ENCODE measurements at regions of chr20 and their contacts with region 1.

Region 1: DNA sequence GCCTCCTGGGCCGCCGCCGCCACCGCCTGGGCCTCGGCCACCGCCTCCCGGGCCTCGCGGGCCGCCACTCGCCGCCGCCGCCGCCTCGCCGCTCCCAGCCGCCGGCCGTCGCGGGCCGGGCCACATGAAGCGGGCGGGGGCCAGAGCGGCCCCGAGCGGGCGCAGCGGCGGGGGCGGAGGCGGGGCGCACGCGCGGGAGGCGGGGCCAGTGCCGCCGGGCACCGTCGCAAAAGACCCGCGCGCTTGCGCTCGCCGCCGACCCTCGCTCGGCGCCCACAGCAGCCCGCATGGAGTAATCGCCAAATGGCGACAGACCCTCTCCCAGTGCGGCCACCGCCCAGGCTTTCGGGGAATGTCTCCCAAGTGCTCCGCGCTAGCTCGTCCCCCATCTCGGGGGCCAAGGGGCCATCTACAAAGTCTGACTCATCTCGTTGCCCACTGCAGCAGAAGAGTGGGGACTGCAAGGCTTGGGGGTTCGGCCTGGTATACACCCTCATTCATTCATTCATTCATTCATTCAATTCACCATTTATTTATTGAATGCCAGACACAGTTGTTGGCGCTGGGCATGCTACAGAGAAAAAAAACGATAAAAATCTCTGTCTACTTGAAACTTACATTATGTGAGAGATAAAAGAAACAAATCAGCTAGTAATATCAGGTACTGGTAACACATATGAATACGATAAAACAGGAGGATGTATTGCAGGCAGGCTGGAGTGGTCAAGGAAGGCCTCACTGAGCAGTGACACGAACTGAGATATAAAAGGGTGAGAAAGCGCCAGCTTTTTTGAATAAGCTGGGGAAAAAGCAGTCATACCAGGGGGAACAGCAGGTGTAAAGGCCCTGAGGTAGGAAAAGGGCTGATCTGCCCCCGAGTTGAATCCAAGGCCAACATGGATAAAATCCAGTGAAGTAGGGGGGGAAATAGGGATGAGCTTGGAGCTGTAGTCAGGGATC is at the start of gene B4GALT5:
- DNase-seq: peak; percentile 79 to 92 (median 88)
- ATAC-seq: peak; percentile 89 to 90
- H3K4me3 ChIP-seq: peak within 1 kb of the TSS; percentile 94
- H3K27ac ChIP-seq: peak within 1 kb of the TSS; percentile 89
- H3K4me1 ChIP-seq: peaks cover 4% of the 10 kb centered on the region
- H3K27me3 ChIP-seq: no peaks in the 10 kb centered on the region
- total RNA-seq, gene B4GALT5: 22.6 to 33.6 (median 23.7) TPM

Region 2: GRCh38 chr20:49620364-49621240 is 93.4 kb before region 1 on chr20:
- intact Hi-C with region 1: no loop called
- DNase-seq: no peak
- ATAC-seq: no peak
- H3K4me3 ChIP-seq: no peak overlapping the region
- H3K27ac ChIP-seq: no peak overlapping the region
- H3K4me1 ChIP-seq: peaks cover under 1% of the 10 kb centered on the region
- H3K27me3 ChIP-seq: no peaks in the 10 kb centered on the region

Region 3: GRCh38 chr20:49785852-49786175 is 71.8 kb after region 1 on chr20:
- intact Hi-C with region 1: loop called in 1 of 4 experiments (anchors 10 kb)
- DNase-seq: no peak
- ATAC-seq: no peak
- H3K4me3 ChIP-seq: no peak overlapping the region
- H3K27ac ChIP-seq: no peak overlapping the region
- H3K4me1 ChIP-seq: peaks cover 3% of the 10 kb centered on the region
- H3K27me3 ChIP-seq: no peaks in the 10 kb centered on the region

Region 4: DNA sequence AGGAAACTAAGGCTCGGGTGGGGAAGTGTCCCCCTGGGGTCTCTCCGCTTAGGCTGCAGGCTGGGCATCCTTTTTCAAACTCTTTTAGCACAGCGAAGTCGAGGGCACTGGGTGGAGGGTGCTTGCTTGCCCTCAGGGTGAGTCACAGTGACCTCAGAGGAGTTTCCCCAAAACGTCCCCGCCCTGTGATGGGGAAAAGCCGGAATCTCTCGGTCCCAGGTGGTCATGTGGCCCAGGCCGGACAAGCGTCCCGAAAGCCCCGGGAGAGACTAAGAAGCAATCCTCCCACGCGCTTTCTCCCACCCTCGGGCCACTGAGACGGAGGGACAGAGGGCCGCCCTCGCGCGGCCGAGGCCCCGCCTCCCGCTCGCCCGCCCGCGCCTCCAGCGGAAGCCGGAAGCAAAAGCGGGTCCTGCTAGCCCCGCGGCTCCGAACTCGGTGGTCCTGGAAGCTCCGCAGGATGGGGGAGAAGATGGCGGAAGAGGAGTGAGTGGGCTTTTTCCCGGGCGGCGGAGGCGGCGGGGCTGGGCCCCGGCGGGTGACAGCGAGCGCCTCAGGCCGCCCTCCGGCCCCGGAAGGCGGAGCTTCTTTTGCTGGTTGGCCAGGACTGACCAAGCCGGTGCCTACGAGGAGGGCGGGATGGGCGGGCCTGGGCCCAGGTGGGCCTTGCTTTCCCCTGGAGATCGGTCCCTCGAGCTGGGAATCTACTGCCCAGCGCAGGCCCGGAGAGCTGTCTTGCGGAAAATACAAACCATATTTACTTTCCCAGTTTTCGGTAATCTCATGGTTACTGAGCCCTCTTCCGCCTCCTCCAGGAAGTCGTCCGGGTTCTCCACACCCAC is 98.7 kb after region 1 on chr20 and contains the start of gene SLC9A8:
- intact Hi-C with region 1: loop called in 2 of 4 experiments (anchors 10 kb)
- DNase-seq: peak; percentile 93 to 96 (median 95)
- ATAC-seq: peak; percentile 97 to 98
- H3K4me3 ChIP-seq: peak within 1 kb of the TSS; percentile 87
- H3K27ac ChIP-seq: peak within 1 kb of the TSS; percentile 89
- H3K4me1 ChIP-seq: peaks cover 8% of the 10 kb centered on the region
- H3K27me3 ChIP-seq: no peaks in the 10 kb centered on the region
- total RNA-seq, gene SLC9A8: 6.9 to 7.3 (median 7.3) TPM

Measured in right cardiac atrium (tissue), 5 donors.